Activated naive CD4-positive, alpha-beta T cell treated with anti-CD3 and anti-CD28 coated beads for 36 hours (primary cell): ENCODE measurements at regions of chr19 and their contacts with region 1.

Region 1: DNA sequence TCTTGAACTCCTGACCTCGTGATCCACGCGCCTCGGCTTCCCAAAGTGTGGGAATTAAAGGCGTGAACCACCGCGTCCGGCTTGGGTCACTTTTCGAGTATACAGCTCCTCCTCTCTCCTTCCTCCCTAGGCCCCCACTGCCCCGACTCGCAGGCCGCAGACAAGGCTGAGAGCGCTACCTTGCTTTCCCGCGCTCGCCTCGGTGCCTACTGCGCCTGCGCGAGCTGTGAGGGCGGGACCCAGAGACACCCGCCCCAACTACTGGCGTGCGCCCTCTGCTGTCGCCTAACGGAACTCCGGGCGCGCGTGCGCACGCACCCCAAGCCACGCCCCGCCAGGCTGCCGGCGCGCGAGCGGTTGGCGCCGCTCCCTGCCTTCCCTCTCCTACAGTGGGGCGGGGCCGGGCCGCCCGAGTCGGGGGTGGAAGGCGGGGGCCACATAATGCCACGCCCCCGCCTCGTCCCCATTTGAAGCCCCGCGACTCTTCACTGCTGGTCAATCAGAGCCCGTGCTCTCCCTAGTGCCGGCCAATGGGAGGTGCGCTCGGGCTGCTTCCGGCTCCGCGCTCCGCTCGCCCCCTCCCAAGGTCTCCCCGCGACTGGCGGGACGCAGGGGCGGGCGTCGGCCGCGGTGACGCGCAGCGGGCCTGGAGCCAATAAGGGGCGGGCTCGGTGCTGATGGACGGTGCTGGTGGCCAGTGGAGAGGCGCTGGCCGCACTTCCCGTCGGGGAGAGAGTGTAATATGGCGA is at the start of gene RAB8A:
- DNase-seq: peak; percentile 99
- H3K4me3 Mint-ChIP-seq: peak within 1 kb of the TSS; percentile 98
- H3K27ac Mint-ChIP-seq: peak within 1 kb of the TSS; percentile 96
- H3K4me1 Mint-ChIP-seq: peaks cover 36% of the 10 kb centered on the region
- H3K27me3 Mint-ChIP-seq: no peaks in the 10 kb centered on the region
- total RNA-seq, gene RAB8A: 90.5 to 95.2 TPM

Region 2: DNA sequence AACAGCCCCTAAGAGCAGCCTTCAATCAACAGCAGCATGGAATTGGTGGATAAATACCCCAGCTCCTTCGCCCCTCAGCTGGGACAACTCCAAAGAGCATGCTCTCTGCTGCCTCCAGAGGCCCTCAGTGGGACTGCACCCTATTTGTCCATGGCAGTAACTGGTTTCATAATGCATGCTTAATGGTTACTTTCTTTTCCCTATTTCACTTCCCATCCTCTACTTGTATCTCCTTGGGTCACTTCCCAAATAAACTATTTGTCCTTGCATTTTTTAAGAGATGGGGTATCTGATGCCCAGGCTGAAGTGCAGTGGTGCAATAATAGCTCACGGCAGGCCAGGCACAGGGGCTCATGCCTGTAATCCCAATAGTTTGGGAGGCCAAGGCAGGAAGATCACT is 48.5 kb before region 1 on chr19:
- CTCF ChIA-PET with region 1: interaction called, 8 read pairs
- intact Hi-C with region 1: loop called (anchors 1 kb)
- DNase-seq: peak; percentile 84
- H3K4me3 Mint-ChIP-seq: no peak overlapping the region
- H3K27ac Mint-ChIP-seq: no peak overlapping the region
- H3K4me1 Mint-ChIP-seq: peaks cover 20% of the 10 kb centered on the region
- H3K27me3 Mint-ChIP-seq: no peaks in the 10 kb centered on the region

Region 3: GRCh38 chr19:16076154-16076957 is 35.0 kb before region 1 on chr19 and contains the start of gene TPM4:
- CTCF ChIA-PET with region 1: interaction called, 7 read pairs
- intact Hi-C with region 1: loop called (anchors 1 kb)
- DNase-seq: peak; percentile 93
- H3K4me3 Mint-ChIP-seq: peak within 1 kb of the TSS; percentile 81
- H3K27ac Mint-ChIP-seq: peak within 1 kb of the TSS; percentile 98
- H3K4me1 Mint-ChIP-seq: peaks cover 65% of the 10 kb centered on the region
- H3K27me3 Mint-ChIP-seq: no peaks in the 10 kb centered on the region
- total RNA-seq, gene TPM4: 240 to 254 TPM

Region 4: DNA sequence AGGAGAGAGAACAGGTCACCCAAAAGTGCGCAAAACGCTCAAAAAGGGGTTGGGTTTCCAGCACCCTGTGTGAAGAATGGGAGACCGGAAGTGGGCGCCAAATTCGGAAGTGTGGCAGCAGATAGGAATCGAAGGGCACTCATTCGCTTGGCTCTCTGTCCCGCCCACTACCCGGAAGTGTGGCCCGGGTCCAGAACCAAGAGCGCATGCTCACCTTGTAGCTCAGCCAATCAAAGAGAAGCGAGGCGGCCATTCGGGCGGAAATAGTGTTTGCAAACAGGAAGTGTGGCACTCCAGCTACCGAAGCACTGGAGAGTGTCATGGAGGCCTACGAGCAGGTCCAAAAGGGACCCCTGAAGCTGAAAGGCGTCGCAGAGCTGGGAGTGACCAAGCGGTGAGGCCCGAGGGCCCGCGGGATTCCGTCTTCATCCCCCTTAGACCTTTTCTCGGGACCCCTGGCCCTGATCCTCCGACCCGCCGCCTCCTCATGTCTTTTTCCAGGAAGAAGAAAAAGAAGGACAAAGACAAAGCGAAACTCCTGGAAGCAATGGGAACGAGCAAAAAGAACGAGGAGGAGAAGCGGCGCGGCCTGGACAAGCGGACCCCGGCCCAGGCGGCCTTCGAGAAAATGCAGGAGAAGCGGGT is 73.9 kb after region 1 on chr19 and contains the start of gene FAM32A:
- CTCF ChIA-PET with region 1: interaction called, 5 read pairs
- intact Hi-C with region 1: loop called (anchors 1 kb)
- DNase-seq: peak; percentile 100
- H3K4me3 Mint-ChIP-seq: peak within 1 kb of the TSS; percentile 98
- H3K27ac Mint-ChIP-seq: peak within 1 kb of the TSS; percentile 95
- H3K4me1 Mint-ChIP-seq: peaks cover 32% of the 10 kb centered on the region
- H3K27me3 Mint-ChIP-seq: no peaks in the 10 kb centered on the region
- total RNA-seq, gene FAM32A: 38.2 to 41.9 TPM

Region 5: DNA sequence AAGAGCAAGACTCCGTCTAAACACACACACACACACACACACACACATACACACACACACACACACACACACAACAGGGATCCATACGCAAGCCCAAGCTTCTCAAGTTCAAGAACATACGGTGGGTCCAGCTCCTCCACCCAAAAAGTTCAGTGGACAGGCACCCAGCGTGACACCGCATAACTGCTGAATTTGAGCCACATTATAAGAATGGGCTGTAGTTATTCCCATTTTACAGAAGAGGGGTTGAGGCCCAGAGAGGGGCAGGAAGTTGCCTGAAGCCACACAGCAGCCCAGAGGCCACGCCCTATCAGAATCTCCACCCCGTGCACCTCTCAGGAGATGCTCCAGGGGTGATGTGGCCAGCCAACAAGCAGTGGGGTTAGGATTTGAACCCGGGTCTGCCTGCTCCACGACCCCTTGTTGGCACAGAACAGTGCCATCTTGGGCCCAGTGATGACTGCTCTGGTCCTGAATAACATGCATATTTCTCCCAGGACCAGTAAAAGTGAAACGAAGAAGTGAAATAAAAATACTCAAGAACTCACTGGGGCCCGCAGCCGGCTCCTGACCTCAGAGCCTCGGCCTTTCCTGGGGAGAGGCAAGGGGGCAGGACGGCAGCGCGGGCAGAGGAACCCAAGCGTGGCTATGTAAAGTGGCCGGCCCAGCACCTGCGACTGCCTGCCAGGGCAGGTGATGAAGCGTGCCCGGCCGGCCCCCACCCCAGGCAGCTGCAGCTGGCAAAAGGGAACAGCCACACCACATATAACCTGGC is 148.2 kb after region 1 on chr19:
- CTCF ChIA-PET with region 1: no interaction called
- intact Hi-C with region 1: no loop called
- DNase-seq: no peak
- H3K4me3 Mint-ChIP-seq: no peak overlapping the region
- H3K27ac Mint-ChIP-seq: no peak overlapping the region
- H3K4me1 Mint-ChIP-seq: peaks cover 31% of the 10 kb centered on the region
- H3K27me3 Mint-ChIP-seq: no peaks in the 10 kb centered on the region

Region 6: GRCh38 chr19:16495982-16496612 is 384.8 kb after region 1 on chr19 and contains the starts of genes C19orf44 and CALR3:
- CTCF ChIA-PET with region 1: no interaction called
- intact Hi-C with region 1: loop called (anchors 1 kb)
- DNase-seq: peak; percentile 98
- H3K4me3 Mint-ChIP-seq: peak within 1 kb of the TSS; percentile 95
- H3K27ac Mint-ChIP-seq: peak within 1 kb of the TSS; percentile 64
- H3K4me1 Mint-ChIP-seq: peaks cover 15% of the 10 kb centered on the region
- H3K27me3 Mint-ChIP-seq: no peaks in the 10 kb centered on the region
- total RNA-seq, gene C19orf44: 2.1 to 2.6 TPM
- total RNA-seq, gene CALR3: not detected